WTC11 (cell line): ENCODE measurements at regions of chr2 and their contacts with region 1.

Region 1: GRCh38 chr2:26959331-26959730 is 11.1 kb upstream of the MAPRE3 start:
- DNase-seq: no peak
- ATAC-seq: no peak
- H3K4me3 Mint-ChIP-seq: no peak overlapping the region
- H3K27ac Mint-ChIP-seq: no peak overlapping the region
- H3K4me1 Mint-ChIP-seq: no peaks in the 10 kb centered on the region
- H3K27me3 Mint-ChIP-seq: peaks cover 7% of the 10 kb centered on the region; the same call in 1 of the 2 replicates
- CTCF ChIP-seq: no peak

Region 2: GRCh38 chr2:26846328-26847306 is 112.7 kb before region 1 on chr2:
- CTCF ChIA-PET with region 1: interaction called, 89 read pairs
- POLR2A ChIA-PET with region 1: no interaction called
- DNase-seq: peak; percentile 76
- ATAC-seq: peak; percentile 33
- H3K4me3 Mint-ChIP-seq: peak overlapping the region; percentile 79
- H3K27ac Mint-ChIP-seq: no peak overlapping the region
- H3K4me1 Mint-ChIP-seq: peaks cover 9% of the 10 kb centered on the region
- H3K27me3 Mint-ChIP-seq: peaks cover 68% of the 10 kb centered on the region
- CTCF ChIP-seq: peak; percentile 53

Region 3: GRCh38 chr2:26894136-26894535 is 65.2 kb before region 1 on chr2:
- CTCF ChIA-PET with region 1: no interaction called
- POLR2A ChIA-PET with region 1: no interaction called
- DNase-seq: no peak
- ATAC-seq: no peak
- H3K4me3 Mint-ChIP-seq: no peak overlapping the region
- H3K27ac Mint-ChIP-seq: no peak overlapping the region
- H3K4me1 Mint-ChIP-seq: no peaks in the 10 kb centered on the region
- H3K27me3 Mint-ChIP-seq: no peaks in the 10 kb centered on the region; the same call in 1 of the 2 replicates
- CTCF ChIP-seq: no peak

Region 4: DNA sequence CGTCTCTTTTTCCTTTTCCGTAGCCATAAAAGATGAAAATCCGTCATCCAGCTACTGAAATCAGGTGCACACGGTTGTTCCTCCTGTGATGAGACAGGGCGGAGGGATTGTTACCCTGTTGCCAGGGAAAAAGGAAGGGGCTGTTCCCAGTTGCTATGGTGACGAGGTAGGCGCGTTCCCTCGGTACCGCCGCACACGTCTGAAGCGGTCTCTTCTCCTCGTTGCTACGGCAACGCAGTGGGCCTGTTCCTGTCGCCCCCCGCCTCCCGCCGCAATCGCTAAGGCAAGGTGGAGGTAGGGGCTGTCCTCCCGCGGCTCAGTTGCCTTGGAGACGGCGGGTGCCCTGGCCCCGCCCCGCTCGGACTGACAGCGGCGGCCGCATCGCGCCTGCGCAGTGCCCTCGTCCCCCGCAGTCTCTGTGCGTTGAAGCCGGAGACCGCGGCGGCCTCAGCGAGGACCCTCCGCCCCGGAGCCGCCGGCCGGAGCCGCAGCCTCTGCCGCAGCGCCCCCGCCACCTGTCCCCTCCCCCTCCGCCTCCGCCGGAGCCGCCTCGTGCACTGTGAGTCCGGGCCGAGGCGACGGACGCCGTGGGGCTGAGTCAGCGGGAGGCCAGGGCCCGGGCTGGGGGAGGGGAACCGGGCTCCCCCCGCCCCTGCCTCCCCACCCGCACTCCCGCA is 11.1 kb after region 1 on chr2 and contains the start of gene MAPRE3:
- CTCF ChIA-PET with region 1: interaction called, 30 read pairs
- POLR2A ChIA-PET with region 1: interaction called, 3 read pairs
- DNase-seq: peak; percentile 97
- ATAC-seq: peak; percentile 90
- H3K4me3 Mint-ChIP-seq: peak within 1 kb of the TSS; percentile 93
- H3K27ac Mint-ChIP-seq: no peak within 1 kb of the TSS
- H3K4me1 Mint-ChIP-seq: peaks cover 29% of the 10 kb centered on the region
- H3K27me3 Mint-ChIP-seq: peaks cover 49% of the 10 kb centered on the region
- CTCF ChIP-seq: no peak
- total RNA-seq, gene MAPRE3: 4.9 to 10.3 TPM (median 6.0 TPM) in 3 replicates

Region 5: GRCh38 chr2:26989156-26989555 is 29.8 kb after region 1 on chr2:
- CTCF ChIA-PET with region 1: interaction called, 16 read pairs
- POLR2A ChIA-PET with region 1: interaction called, 3 read pairs
- DNase-seq: no peak
- ATAC-seq: no peak
- H3K4me3 Mint-ChIP-seq: no peak overlapping the region
- H3K27ac Mint-ChIP-seq: no peak overlapping the region
- H3K4me1 Mint-ChIP-seq: no peaks in the 10 kb centered on the region
- H3K27me3 Mint-ChIP-seq: no peaks in the 10 kb centered on the region
- CTCF ChIP-seq: no peak

Region 6: GRCh38 chr2:27016801-27017325 is 57.5 kb after region 1 on chr2:
- CTCF ChIA-PET with region 1: interaction called, 596 read pairs
- POLR2A ChIA-PET with region 1: interaction called, 8 read pairs
- DNase-seq: peak; percentile 83
- ATAC-seq: peak; percentile 92
- H3K4me3 Mint-ChIP-seq: no peak overlapping the region
- H3K27ac Mint-ChIP-seq: no peak overlapping the region
- H3K4me1 Mint-ChIP-seq: peaks cover 12% of the 10 kb centered on the region
- H3K27me3 Mint-ChIP-seq: peaks cover 11% of the 10 kb centered on the region; the same call in 1 of the 2 replicates
- CTCF ChIP-seq: peak; percentile 71

Region 7: GRCh38 chr2:27041752-27042151 is 82.4 kb after region 1 on chr2:
- CTCF ChIA-PET with region 1: interaction called, 10 read pairs
- POLR2A ChIA-PET with region 1: no interaction called
- DNase-seq: no peak
- ATAC-seq: no peak
- H3K4me3 Mint-ChIP-seq: no peak overlapping the region
- H3K27ac Mint-ChIP-seq: no peak overlapping the region
- H3K4me1 Mint-ChIP-seq: no peaks in the 10 kb centered on the region
- H3K27me3 Mint-ChIP-seq: no peaks in the 10 kb centered on the region
- CTCF ChIP-seq: no peak

Region 8: GRCh38 chr2:27086090-27086723 is 126.9 kb after region 1 on chr2:
- CTCF ChIA-PET with region 1: interaction called, 17 read pairs
- POLR2A ChIA-PET with region 1: no interaction called
- DNase-seq: peak; percentile 97
- ATAC-seq: peak; percentile 81
- H3K4me3 Mint-ChIP-seq: peak overlapping the region; percentile 70
- H3K27ac Mint-ChIP-seq: no peak overlapping the region
- H3K4me1 Mint-ChIP-seq: peaks cover 21% of the 10 kb centered on the region
- H3K27me3 Mint-ChIP-seq: peaks cover 23% of the 10 kb centered on the region
- CTCF ChIP-seq: peak; percentile 98

Region 9: GRCh38 chr2:27322766-27323595 is 363.6 kb after region 1 on chr2 and contains the start of gene MPV17:
- CTCF ChIA-PET with region 1: no interaction called
- POLR2A ChIA-PET with region 1: no interaction called
- DNase-seq: peak; percentile 91
- ATAC-seq: peak; percentile 89
- H3K4me3 Mint-ChIP-seq: peak within 1 kb of the TSS; percentile 99
- H3K27ac Mint-ChIP-seq: peak within 1 kb of the TSS; percentile 94
- H3K4me1 Mint-ChIP-seq: peaks cover 11% of the 10 kb centered on the region
- H3K27me3 Mint-ChIP-seq: no peaks in the 10 kb centered on the region
- CTCF ChIP-seq: no peak
- total RNA-seq, gene MPV17: 51.5 to 60.4 TPM (median 59.3 TPM) in 3 replicates